CD4-positive, alpha-beta T cell (primary cell): ENCODE measurements at regions of chr7 and their contacts with region 1.

Region 1: GRCh38 chr7:143214789-143215679 is 6.8 kb upstream of the TAS2R40 start:
- DNase-seq: peak; percentile 18 to 89 (median 46)
- ATAC-seq: peak; percentile 98
- H3K4me3 ChIP-seq: no peak overlapping the region
- H3K4me3 Mint-ChIP-seq: no peak overlapping the region
- H3K27ac ChIP-seq: no peak overlapping the region
- H3K27ac Mint-ChIP-seq: no peak overlapping the region
- H3K4me1 ChIP-seq: no peaks in the 10 kb centered on the region
- H3K4me1 Mint-ChIP-seq: no peaks in the 10 kb centered on the region
- H3K27me3 ChIP-seq: no peaks in the 10 kb centered on the region
- H3K27me3 Mint-ChIP-seq: peaks cover 4% of the 10 kb centered on the region
- CTCF ChIP-seq: peak; percentile 100

Region 2: GRCh38 chr7:142301923-142302550 is 913.0 kb before region 1 on chr7:
- CTCF ChIA-PET with region 1: no interaction called
- POLR2A ChIA-PET with region 1: no interaction called
- intact Hi-C with region 1: loop called (anchors 5 kb)
- DNase-seq: peak in 3 of 14 experiments; percentile 29 to 38 (median 33)
- ATAC-seq: no peak
- H3K4me3 ChIP-seq: no peak overlapping the region
- H3K4me3 Mint-ChIP-seq: no peak overlapping the region
- H3K27ac ChIP-seq: no peak overlapping the region
- H3K27ac Mint-ChIP-seq: no peak overlapping the region
- H3K4me1 ChIP-seq: peaks cover 12% of the 10 kb centered on the region
- H3K4me1 Mint-ChIP-seq: peaks cover 40% of the 10 kb centered on the region
- H3K27me3 ChIP-seq: no peaks in the 10 kb centered on the region
- H3K27me3 Mint-ChIP-seq: peaks cover 24% of the 10 kb centered on the region
- CTCF ChIP-seq: peak; percentile 16

Region 3: GRCh38 chr7:142412551-142413193 is 802.4 kb before region 1 on chr7:
- CTCF ChIA-PET with region 1: interaction called, 3 read pairs
- POLR2A ChIA-PET with region 1: no interaction called
- intact Hi-C with region 1: loop called (anchors 10 kb)
- DNase-seq: peak in 12 of 14 experiments; percentile 7 to 77 (median 22)
- ATAC-seq: peak; percentile 76
- H3K4me3 ChIP-seq: no peak overlapping the region
- H3K4me3 Mint-ChIP-seq: no peak overlapping the region
- H3K27ac ChIP-seq: no peak overlapping the region
- H3K27ac Mint-ChIP-seq: no peak overlapping the region
- H3K4me1 ChIP-seq: peaks cover 4% of the 10 kb centered on the region
- H3K4me1 Mint-ChIP-seq: no peaks in the 10 kb centered on the region
- H3K27me3 ChIP-seq: no peaks in the 10 kb centered on the region
- H3K27me3 Mint-ChIP-seq: no peaks in the 10 kb centered on the region
- CTCF ChIP-seq: peak; percentile 68

Region 4: GRCh38 chr7:142535123-142535779 is 679.8 kb before region 1 on chr7:
- CTCF ChIA-PET with region 1: interaction called, 3 read pairs
- POLR2A ChIA-PET with region 1: no interaction called
- intact Hi-C with region 1: loop called (anchors 1 to 5 kb)
- DNase-seq: peak; percentile 35 to 86 (median 66)
- ATAC-seq: peak; percentile 82
- H3K4me3 ChIP-seq: peak overlapping the region; percentile 15
- H3K4me3 Mint-ChIP-seq: peak overlapping the region; percentile 75
- H3K27ac ChIP-seq: peak overlapping the region; percentile 8 to 57
- H3K27ac Mint-ChIP-seq: peak overlapping the region; percentile 77
- H3K4me1 ChIP-seq: peaks cover 19% of the 10 kb centered on the region
- H3K4me1 Mint-ChIP-seq: peaks cover 41% of the 10 kb centered on the region
- H3K27me3 ChIP-seq: no peaks in the 10 kb centered on the region
- H3K27me3 Mint-ChIP-seq: no peaks in the 10 kb centered on the region
- CTCF ChIP-seq: peak; percentile 64

Region 5: GRCh38 chr7:142632291-142633134 is 582.5 kb before region 1 on chr7:
- CTCF ChIA-PET with region 1: interaction called, 3 read pairs
- POLR2A ChIA-PET with region 1: no interaction called
- intact Hi-C with region 1: loop called (anchors 5 to 10 kb)
- DNase-seq: peak; percentile 22 to 83 (median 44)
- ATAC-seq: peak; percentile 42
- H3K4me3 ChIP-seq: no peak overlapping the region
- H3K4me3 Mint-ChIP-seq: no peak overlapping the region
- H3K27ac ChIP-seq: no peak overlapping the region
- H3K27ac Mint-ChIP-seq: peak overlapping the region; percentile 54
- H3K4me1 ChIP-seq: peaks cover 8% of the 10 kb centered on the region
- H3K4me1 Mint-ChIP-seq: peaks cover 15% of the 10 kb centered on the region
- H3K27me3 ChIP-seq: no peaks in the 10 kb centered on the region
- H3K27me3 Mint-ChIP-seq: no peaks in the 10 kb centered on the region
- CTCF ChIP-seq: peak; percentile 58

Region 6: DNA sequence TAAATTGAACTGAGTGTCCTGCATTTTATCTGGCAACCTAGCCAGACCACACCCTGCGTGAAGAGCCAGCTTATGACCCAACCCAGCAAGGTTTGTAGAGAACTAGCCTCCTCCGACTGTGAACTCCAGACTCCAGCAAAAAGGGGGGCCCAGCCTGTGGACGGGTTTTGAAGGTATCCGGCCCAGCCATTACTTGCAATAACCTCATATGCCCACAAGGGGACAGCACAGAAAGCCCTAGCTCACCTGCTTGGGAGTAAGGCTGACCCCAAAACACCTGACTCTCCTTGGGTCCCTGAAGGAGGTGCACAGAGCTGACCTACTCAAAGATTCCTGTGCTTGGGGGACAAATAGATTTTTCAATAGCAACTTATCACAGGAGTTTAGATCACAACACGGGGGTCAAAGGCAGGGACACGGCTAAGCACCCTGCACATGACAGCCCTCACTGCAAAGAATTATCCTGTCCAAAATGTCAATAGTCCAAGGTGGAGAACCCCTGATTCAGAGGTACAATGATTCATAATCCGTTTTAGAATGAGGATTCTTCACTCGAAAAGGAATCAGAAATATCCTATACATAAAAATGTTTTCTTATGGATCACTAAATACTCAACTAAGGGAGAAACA is 334.0 kb before region 1 on chr7:
- CTCF ChIA-PET with region 1: interaction called, 4 read pairs
- POLR2A ChIA-PET with region 1: no interaction called
- intact Hi-C with region 1: loop called in 1 of 2 experiments (anchors 10 kb)
- DNase-seq: peak; percentile 23 to 75 (median 32)
- ATAC-seq: peak; percentile 84
- H3K4me3 ChIP-seq: no peak overlapping the region
- H3K4me3 Mint-ChIP-seq: no peak overlapping the region
- H3K27ac ChIP-seq: no peak overlapping the region
- H3K27ac Mint-ChIP-seq: no peak overlapping the region
- H3K4me1 ChIP-seq: no peaks in the 10 kb centered on the region
- H3K4me1 Mint-ChIP-seq: no peaks in the 10 kb centered on the region
- H3K27me3 ChIP-seq: no peaks in the 10 kb centered on the region
- H3K27me3 Mint-ChIP-seq: peaks cover 5% of the 10 kb centered on the region
- CTCF ChIP-seq: peak; percentile 83

Region 7: DNA sequence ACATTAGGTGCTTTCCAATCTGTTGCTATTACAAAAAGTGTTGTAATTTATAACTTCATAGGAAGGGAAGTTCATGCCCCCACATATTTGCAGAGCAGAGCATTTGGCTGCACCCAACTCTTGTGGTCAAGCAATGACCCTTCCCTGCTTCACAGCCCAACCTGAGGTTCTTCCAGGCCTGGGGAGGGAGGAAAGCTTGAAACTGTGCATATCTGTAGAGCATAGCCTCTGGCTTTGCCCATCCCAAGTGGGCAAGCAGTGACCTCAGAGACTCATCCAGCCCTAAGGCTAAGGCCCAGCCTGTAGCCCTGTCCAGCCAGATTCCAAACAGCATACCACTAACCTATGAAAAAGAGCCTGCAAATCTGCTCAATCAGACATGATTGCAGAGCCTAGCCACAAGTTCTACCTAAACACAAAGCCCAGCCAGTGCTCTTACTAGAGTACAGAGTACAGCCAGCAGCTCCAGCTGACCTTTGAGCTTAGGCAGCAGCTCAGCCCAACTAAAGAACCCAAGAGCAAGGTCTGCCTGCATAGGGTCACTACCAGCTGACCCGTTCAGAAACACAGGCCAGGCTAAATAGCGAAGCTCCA is 33.8 kb after region 1 on chr7:
- CTCF ChIA-PET with region 1: no interaction called
- POLR2A ChIA-PET with region 1: no interaction called
- intact Hi-C with region 1: no loop called
- DNase-seq: no peak
- ATAC-seq: no peak
- H3K4me3 ChIP-seq: no peak overlapping the region
- H3K4me3 Mint-ChIP-seq: peak overlapping the region; percentile 23
- H3K27ac ChIP-seq: peak overlapping the region in 1 of 2 donors; percentile 10
- H3K27ac Mint-ChIP-seq: no peak overlapping the region
- H3K4me1 ChIP-seq: peaks cover 54% of the 10 kb centered on the region
- H3K4me1 Mint-ChIP-seq: peaks cover 97% of the 10 kb centered on the region
- H3K27me3 ChIP-seq: no peaks in the 10 kb centered on the region
- H3K27me3 Mint-ChIP-seq: no peaks in the 10 kb centered on the region
- CTCF ChIP-seq: no peak